H1 (cell line): ENCODE measurements at regions of chr22 and their contacts with region 1.

Region 1: GRCh38 chr22:29580200-29580810 is 608 bp downstream of the NIPSNAP1 start:
- DNase-seq: peak in 1 of 2 experiments; percentile 63
- H3K4me3 ChIP-seq: peak overlapping the region; percentile 74 to 92 (median 85)
- H3K27ac ChIP-seq: peak overlapping the region; percentile 96
- H3K4me1 ChIP-seq: peaks cover 0 to 13% (median 9%) of the 10 kb centered on the region in 4 experiments; a peak in 6 of 7 replicates
- H3K27me3 ChIP-seq: no peaks in the 10 kb centered on the region
- CTCF ChIP-seq: no peak
- EP300 ChIP-seq: no peak
- POLR2A ChIP-seq: peak in 1 of 2 experiments; percentile 85; a peak in 2 of 3 replicates
- RAD21 ChIP-seq: no peak

Region 2: DNA sequence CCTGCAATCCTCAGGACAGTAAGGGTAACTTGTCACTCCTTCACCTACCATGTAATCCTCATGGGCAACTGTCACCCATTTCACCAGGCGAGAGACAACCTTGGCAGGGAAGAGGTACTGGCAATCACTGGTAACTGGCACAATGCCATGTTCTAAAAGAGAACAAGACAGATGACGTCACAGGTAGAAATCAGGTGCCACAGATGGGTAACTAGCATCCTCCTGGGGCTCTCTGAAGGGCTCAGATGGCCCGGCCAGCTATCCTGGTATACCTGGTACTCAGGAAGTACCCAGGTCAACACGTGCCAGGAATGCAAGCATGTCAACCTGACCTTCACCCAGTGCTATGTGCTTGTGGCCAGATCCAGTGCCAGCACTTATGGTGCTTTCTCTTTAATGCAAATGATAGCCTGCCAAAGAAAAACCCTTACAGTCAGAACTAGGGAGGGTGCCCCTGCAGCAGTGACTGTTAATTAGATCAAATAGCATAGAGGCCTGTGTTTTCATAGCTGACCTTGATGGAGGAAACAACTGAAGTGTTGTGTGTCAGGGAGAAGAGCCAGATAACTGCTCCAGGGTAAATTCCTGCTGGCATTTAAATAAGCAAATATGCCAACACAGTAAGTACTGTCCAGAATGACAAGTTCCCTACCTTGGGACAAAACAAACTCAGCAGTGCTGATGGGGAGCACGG is 62.9 kb before region 1 on chr22:
- CTCF ChIA-PET with region 1: no interaction called
- POLR2A ChIA-PET with region 1: no interaction called
- DNase-seq: no peak
- H3K4me3 ChIP-seq: no peak overlapping the region
- H3K27ac ChIP-seq: no peak overlapping the region
- H3K4me1 ChIP-seq: no peaks in the 10 kb centered on the region
- H3K27me3 ChIP-seq: no peaks in the 10 kb centered on the region
- CTCF ChIP-seq: no peak
- EP300 ChIP-seq: no peak
- POLR2A ChIP-seq: no peak
- RAD21 ChIP-seq: no peak

Region 3: DNA sequence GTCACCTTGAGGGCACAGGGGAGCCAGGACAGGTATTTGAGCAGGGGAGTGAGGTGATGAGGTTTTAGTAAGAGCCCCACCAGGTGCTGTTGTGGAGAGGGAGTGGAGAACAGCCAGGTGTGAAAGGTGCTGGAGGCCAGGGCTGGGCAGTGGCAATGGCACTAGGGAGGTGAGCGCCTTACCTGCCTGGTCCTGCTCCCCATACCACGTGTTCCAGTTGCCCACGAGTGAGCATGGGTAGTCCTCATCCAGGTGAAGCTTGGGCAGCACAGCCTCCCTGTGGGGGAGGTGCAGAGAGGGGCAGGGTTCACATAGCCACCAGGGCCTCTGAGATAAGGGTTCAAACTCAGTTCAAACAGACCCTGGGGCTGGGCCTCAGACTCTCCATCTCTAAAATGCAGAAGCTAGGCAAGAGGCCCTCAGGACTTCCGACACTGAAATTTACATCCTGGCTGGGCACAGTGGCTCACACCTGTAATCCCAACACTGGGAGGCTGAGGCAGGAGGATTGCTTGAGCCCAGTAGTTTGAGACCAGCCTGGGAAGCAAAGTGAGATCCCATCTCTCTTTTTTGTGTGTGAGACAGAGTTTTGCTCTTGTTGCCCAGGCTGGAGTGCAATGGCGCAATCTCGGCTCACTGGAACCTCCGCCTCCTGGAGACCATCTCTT is 11.2 kb before region 1 on chr22:
- CTCF ChIA-PET with region 1: no interaction called
- POLR2A ChIA-PET with region 1: interaction called, 11 read pairs
- DNase-seq: no peak
- H3K4me3 ChIP-seq: no peak overlapping the region
- H3K27ac ChIP-seq: no peak overlapping the region
- H3K4me1 ChIP-seq: no peaks in the 10 kb centered on the region
- H3K27me3 ChIP-seq: no peaks in the 10 kb centered on the region
- CTCF ChIP-seq: no peak
- EP300 ChIP-seq: no peak
- POLR2A ChIP-seq: no peak
- RAD21 ChIP-seq: no peak

Region 4: DNA sequence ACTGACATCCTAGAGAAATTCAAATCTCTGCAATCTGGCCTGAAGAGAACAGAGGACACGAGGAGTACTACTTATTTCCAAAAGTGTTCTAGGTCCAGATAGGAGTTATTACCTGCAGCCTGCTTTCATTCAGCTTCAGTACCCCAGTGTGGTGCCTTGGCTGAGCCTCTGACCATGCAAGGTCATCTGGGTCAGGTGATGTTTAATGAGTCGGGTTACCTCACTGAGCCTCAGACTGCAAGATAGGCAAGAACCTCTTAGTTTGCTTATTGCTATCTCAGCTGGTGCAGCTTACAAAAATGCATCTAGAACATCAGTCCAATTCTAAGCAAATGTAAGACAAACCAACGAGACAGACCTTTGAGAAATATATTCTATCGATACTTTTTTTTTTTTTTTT is 13.6 kb after region 1 on chr22:
- CTCF ChIA-PET with region 1: interaction called, 6 read pairs
- POLR2A ChIA-PET with region 1: interaction called, 12 read pairs
- DNase-seq: no peak
- H3K4me3 ChIP-seq: no peak overlapping the region
- H3K27ac ChIP-seq: no peak overlapping the region
- H3K4me1 ChIP-seq: no peaks in the 10 kb centered on the region
- H3K27me3 ChIP-seq: no peaks in the 10 kb centered on the region
- CTCF ChIP-seq: no peak
- EP300 ChIP-seq: no peak
- POLR2A ChIP-seq: no peak
- RAD21 ChIP-seq: no peak